Psoas muscle (tissue), 8 donors: ENCODE measurements at regions of chr5 and their contacts with region 1.

Region 1: DNA sequence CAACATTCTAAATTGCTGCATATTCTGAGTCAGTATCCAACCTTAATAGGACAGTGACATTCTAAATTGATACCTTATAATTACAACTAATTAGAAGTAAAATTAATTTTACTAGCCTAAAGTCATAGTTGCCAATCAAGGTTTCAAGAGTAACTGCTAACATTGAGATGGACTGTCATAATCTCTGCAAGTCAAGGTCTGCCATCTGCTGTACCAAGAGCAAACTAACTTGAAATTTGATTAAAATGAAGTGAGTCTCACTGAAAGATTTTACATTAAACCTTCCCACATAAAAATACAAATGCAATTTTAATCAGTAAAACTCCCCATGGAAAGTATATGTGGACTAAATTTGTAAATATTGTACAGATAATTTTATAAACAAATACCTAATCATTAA is 235.3 kb downstream of the PRDM9 start:
- DNase-seq: no peak
- ATAC-seq: no peak
- H3K4me3 ChIP-seq: no peak overlapping the region
- H3K27ac ChIP-seq: no peak overlapping the region
- H3K4me1 ChIP-seq: no peaks in the 10 kb centered on the region
- H3K27me3 ChIP-seq: no peaks in the 10 kb centered on the region
- CTCF ChIP-seq: peak; percentile 26

Region 2: GRCh38 chr5:23352437-23352836 is 390.3 kb before region 1 on chr5:
- intact Hi-C with region 1: loop called in 1 of 2 experiments (anchors 10 kb)
- DNase-seq: no peak
- ATAC-seq: no peak
- H3K4me3 ChIP-seq: no peak overlapping the region
- H3K27ac ChIP-seq: no peak overlapping the region
- H3K4me1 ChIP-seq: no peaks in the 10 kb centered on the region
- H3K27me3 ChIP-seq: no peaks in the 10 kb centered on the region
- CTCF ChIP-seq: peak; percentile 30

Region 3: GRCh38 chr5:23884405-23884804 is 141.7 kb after region 1 on chr5:
- intact Hi-C with region 1: no loop called
- DNase-seq: no peak
- ATAC-seq: no peak
- H3K4me3 ChIP-seq: no peak overlapping the region
- H3K27ac ChIP-seq: no peak overlapping the region
- H3K4me1 ChIP-seq: no peaks in the 10 kb centered on the region
- H3K27me3 ChIP-seq: no peaks in the 10 kb centered on the region
- CTCF ChIP-seq: no peak